ENCODE measurements at regions of chr10 and their contacts with region 1.

Region 1: GRCh38 chr10:70363971-70364771 is 18.3 kb downstream of the LRRC20 start:
- DNase-seq: peak; percentile 95
- ATAC-seq: peak; percentile 98 to 99
- H3K4me3 ChIP-seq: peak overlapping the region; percentile 24
- H3K27ac ChIP-seq: peak overlapping the region; percentile 84
- H3K4me1 ChIP-seq: peaks cover 18% of the 10 kb centered on the region
- H3K27me3 ChIP-seq: no peaks in the 10 kb centered on the region
- CTCF ChIP-seq: peak; percentile 96

Region 2: DNA sequence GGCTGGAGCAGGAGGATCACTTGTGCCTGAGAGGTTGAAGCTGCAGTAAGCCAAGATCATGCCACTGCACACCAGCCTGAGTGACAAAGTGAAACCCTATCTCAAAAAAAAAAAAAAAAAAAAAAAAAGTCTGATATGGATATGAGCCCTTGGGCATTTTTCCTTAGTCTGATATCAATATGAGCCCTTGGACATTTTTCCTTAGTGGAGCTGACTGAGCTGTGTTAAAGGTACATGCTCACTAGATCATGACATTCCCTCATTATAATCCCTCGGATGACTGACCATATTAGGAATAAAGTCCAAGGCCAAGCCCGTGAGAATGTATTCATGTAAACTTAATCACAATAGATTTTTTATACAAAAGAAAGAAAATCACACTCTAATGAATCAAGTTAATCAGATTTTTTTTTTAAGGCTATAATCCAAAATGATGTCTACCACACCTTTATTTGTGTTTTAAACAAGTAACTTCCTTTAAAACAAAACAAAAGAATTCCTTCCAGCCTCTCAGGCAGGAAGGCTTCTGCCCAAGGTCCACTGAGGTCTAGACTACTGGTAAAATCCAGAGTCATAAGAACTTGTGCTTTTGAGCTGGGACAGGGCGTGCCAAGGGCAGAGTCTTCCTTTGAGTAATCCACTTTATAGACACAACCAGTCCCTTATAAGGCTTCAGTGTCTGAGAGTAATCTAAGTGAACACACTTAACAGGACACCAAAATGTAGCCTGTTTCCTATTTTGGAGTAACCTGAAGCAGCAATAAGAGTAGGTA is 136.4 kb before region 1 on chr10:
- intact Hi-C with region 1: loop called (anchors 10 kb)
- DNase-seq: no peak
- ATAC-seq: no peak
- H3K4me3 ChIP-seq: no peak overlapping the region
- H3K27ac ChIP-seq: peak overlapping the region; percentile 37
- H3K4me1 ChIP-seq: peaks cover 48% of the 10 kb centered on the region
- H3K27me3 ChIP-seq: no peaks in the 10 kb centered on the region
- CTCF ChIP-seq: no peak